ENCODE measurements at regions of chr11 and their contacts with region 1.

Region 1: GRCh38 chr11:85154294-85154693 is 472.9 kb downstream of the DLG2 start:
- DNase-seq: no peak
- ATAC-seq: no peak
- H3K4me3 ChIP-seq: no peak overlapping the region
- H3K4me3 Mint-ChIP-seq: no peak overlapping the region
- H3K27ac ChIP-seq: no peak overlapping the region
- H3K27ac Mint-ChIP-seq: no peak overlapping the region
- H3K4me1 ChIP-seq: no peaks in the 10 kb centered on the region
- H3K4me1 Mint-ChIP-seq: peaks cover 2% of the 10 kb centered on the region
- H3K27me3 ChIP-seq: no peaks in the 10 kb centered on the region
- H3K27me3 Mint-ChIP-seq: no peaks in the 10 kb centered on the region
- CTCF ChIP-seq: no peak

Region 2: GRCh38 chr11:85347291-85347690 is 193.0 kb after region 1 on chr11:
- CTCF ChIA-PET with region 1: no interaction called
- POLR2A ChIA-PET with region 1: interaction called, 11 read pairs
- intact Hi-C with region 1: no loop called
- DNase-seq: no peak
- ATAC-seq: no peak
- H3K4me3 ChIP-seq: no peak overlapping the region
- H3K4me3 Mint-ChIP-seq: no peak overlapping the region
- H3K27ac ChIP-seq: no peak overlapping the region
- H3K27ac Mint-ChIP-seq: no peak overlapping the region
- H3K4me1 ChIP-seq: no peaks in the 10 kb centered on the region
- H3K4me1 Mint-ChIP-seq: peaks cover 8% of the 10 kb centered on the region
- H3K27me3 ChIP-seq: no peaks in the 10 kb centered on the region
- H3K27me3 Mint-ChIP-seq: no peaks in the 10 kb centered on the region
- CTCF ChIP-seq: no peak

Measured in B cell (primary cell).